ENCODE measurements at regions of chr12 and their contacts with region 1.

Region 1: DNA sequence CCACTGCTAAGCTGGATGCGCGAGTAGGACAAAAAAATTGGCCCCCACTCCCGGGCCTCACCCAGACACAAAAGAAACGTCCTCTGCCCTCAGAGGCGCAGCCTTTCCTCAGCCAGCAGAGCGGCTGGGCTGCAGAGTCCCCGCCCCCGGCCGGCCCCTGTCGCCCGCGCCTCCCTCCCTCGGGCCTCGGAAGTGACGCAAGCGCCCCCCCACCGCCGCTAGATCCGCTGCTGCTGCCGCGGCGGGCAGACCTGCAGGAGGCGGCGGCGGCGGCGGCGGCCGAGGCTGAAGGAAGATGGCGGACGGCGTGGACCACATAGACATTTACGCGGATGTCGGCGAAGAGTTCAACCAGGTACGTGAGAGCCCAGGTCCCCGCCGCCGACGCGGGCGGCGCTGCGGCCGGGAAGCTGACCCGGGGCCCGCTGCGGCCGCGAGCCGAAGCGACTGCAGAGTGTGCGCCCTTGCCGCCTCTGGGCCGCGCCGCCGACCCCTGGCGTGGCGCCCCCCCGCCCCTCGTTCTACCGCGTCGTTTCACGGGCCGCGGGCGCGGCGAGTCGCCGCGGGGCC is at the start of gene CPSF6:
- DNase-seq: peak; percentile 96
- ATAC-seq: peak; percentile 93
- H3K4me3 Mint-ChIP-seq: peak within 1 kb of the TSS; percentile 99
- H3K27ac Mint-ChIP-seq: peak within 1 kb of the TSS; percentile 96
- H3K4me1 Mint-ChIP-seq: peaks cover 51% of the 10 kb centered on the region
- H3K27me3 Mint-ChIP-seq: no peaks in the 10 kb centered on the region
- CTCF ChIP-seq: no peak
- total RNA-seq, gene CPSF6: 95.5 and 104 TPM in 2 replicates

Region 2: GRCh38 chr12:69254046-69254445 is 14.6 kb after region 1 on chr12:
- CTCF ChIA-PET with region 1: interaction called, 6 read pairs
- POLR2A ChIA-PET with region 1: interaction called, 6 read pairs
- intact Hi-C with region 1: loop called (anchors 1 kb)
- DNase-seq: no peak
- ATAC-seq: peak; percentile 50
- H3K4me3 Mint-ChIP-seq: no peak overlapping the region
- H3K27ac Mint-ChIP-seq: no peak overlapping the region
- H3K4me1 Mint-ChIP-seq: peaks cover 42% of the 10 kb centered on the region
- H3K27me3 Mint-ChIP-seq: no peaks in the 10 kb centered on the region
- CTCF ChIP-seq: no peak

Region 3: DNA sequence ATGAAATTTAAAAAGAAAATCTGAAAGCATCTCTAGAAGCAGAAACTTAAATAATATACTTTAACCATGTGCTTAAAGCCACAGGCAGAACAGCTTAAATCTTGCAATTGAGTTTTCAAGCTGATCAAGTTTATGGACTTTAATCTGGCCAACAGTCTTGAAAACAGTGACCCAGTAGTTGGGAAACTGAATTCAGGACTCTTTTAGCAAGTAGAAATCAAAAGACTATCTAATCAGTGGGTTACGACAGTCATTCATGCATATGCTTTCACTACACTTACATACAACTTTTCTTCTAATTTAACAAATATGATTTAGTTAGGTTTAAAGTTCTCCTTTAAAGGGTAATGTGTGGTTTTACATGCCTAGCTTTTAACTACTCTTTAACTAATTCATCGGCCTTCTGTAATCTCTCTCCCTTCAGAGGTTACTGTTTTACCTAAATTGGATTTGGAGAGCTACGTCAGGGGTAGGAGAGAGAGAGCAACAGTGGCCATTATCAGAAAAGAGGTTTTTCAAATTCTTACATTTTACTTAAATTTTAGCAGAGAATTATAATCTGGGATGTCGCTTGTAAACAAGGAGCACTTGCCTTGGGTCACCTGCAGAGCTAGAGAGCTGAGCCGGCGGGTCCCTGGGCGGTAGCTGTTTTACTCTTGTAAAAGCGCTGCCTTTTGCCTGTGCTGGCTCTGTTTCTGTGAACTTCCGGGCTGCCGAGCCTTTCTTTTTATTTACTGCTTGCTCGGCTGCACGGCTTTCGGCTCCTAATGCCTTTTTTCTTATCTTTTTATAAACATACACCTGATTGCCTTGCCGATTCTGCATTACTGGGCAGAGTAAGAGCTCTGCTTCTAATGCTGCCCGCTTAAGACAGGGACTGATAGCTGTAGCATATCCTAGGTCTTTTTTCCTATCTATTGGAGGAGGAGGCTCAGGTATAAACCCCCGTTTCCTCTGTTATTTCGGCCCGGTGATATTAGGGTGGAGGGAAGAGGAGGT is 91.3 kb after region 1 on chr12:
- CTCF ChIA-PET with region 1: no interaction called
- POLR2A ChIA-PET with region 1: no interaction called
- intact Hi-C with region 1: loop called (anchors 2 kb)
- DNase-seq: peak; percentile 33
- ATAC-seq: peak; percentile 85
- H3K4me3 Mint-ChIP-seq: peak overlapping the region; percentile 86
- H3K27ac Mint-ChIP-seq: peak overlapping the region; percentile 92
- H3K4me1 Mint-ChIP-seq: peaks cover 26% of the 10 kb centered on the region
- H3K27me3 Mint-ChIP-seq: no peaks in the 10 kb centered on the region
- CTCF ChIP-seq: no peak

Region 4: DNA sequence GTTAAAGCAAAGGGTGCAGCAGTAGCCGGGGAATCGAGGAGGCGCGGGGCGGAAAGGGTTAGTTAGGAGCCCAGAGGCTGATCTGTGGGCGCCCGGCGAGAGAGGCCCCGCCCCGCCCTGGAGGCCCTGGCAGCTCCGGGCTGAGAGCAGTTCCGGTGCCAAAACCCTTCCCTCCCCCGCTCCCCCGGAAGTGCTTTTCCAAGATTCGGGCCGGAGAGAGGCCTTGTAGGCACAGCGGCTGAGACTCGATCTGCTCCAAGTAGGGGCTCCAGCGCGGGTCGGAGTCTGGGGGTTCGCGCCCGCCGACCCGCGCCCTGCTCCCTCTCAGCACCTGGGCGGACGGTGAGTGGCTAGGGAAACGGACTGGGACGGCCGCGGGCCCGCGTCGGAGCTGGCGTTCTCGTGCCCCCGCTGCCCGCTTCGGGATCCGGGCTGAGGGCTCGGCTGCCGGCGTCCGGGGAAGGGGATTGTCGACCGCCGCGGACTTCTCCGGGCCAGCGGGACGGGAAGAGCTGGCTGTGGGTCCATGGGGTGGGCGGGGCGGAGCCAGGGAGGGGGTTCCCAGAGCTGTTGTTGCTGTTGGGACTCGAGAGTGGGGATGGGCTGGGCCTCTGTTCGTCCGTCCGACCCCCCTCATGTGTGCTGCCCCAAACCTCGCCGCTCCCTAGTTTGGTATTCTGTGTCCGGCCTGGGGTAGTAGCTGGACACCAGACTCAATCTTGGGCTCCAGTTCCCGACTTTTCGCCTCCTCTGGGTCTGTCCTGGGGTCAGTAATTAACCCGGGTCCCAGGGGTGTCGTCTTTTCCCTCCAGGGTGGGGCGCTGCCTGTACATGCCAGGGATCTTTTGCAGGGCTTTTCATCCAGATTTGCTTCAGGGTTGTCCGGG is 231.0 kb after region 1 on chr12 and contains the start of gene FRS2:
- CTCF ChIA-PET with region 1: no interaction called
- POLR2A ChIA-PET with region 1: interaction called, 4 read pairs
- intact Hi-C with region 1: loop called (anchors 1 kb)
- DNase-seq: peak; percentile 77
- ATAC-seq: peak; percentile 98
- H3K4me3 Mint-ChIP-seq: peak within 1 kb of the TSS; percentile 99
- H3K27ac Mint-ChIP-seq: peak within 1 kb of the TSS; percentile 95
- H3K4me1 Mint-ChIP-seq: peaks cover 77% of the 10 kb centered on the region
- H3K27me3 Mint-ChIP-seq: no peaks in the 10 kb centered on the region
- CTCF ChIP-seq: no peak
- total RNA-seq, gene FRS2: 23.2 and 23.8 TPM in 2 replicates

Region 5: GRCh38 chr12:69585189-69586062 is 346.0 kb after region 1 on chr12 and contains the start of gene CCT2:
- CTCF ChIA-PET with region 1: no interaction called
- POLR2A ChIA-PET with region 1: no interaction called
- intact Hi-C with region 1: loop called (anchors 1 kb)
- DNase-seq: peak; percentile 91
- ATAC-seq: peak; percentile 90
- H3K4me3 Mint-ChIP-seq: peak within 1 kb of the TSS; percentile 96
- H3K27ac Mint-ChIP-seq: peak within 1 kb of the TSS; percentile 95
- H3K4me1 Mint-ChIP-seq: peaks cover 8% of the 10 kb centered on the region
- H3K27me3 Mint-ChIP-seq: no peaks in the 10 kb centered on the region
- CTCF ChIP-seq: no peak
- total RNA-seq, gene CCT2: 205 and 211 TPM in 2 replicates

Region 6: GRCh38 chr12:69738351-69739286 is 499.2 kb after region 1 on chr12 and contains the start of gene RAB3IP:
- CTCF ChIA-PET with region 1: no interaction called
- POLR2A ChIA-PET with region 1: no interaction called
- intact Hi-C with region 1: loop called (anchors 2 kb)
- DNase-seq: peak; percentile 93
- ATAC-seq: peak; percentile 90
- H3K4me3 Mint-ChIP-seq: peak within 1 kb of the TSS; percentile 85
- H3K27ac Mint-ChIP-seq: peak within 1 kb of the TSS; percentile 73
- H3K4me1 Mint-ChIP-seq: peaks cover 19% of the 10 kb centered on the region
- H3K27me3 Mint-ChIP-seq: peaks cover 4% of the 10 kb centered on the region
- CTCF ChIP-seq: no peak
- total RNA-seq, gene RAB3IP: 34.6 and 37.9 TPM in 2 replicates